ENCODE measurements at regions of chr1 and their contacts with region 1.

Region 1: GRCh38 chr1:182391362-182392044 is at the start of gene GLUL:
- DNase-seq: peak; percentile 58 to 62
- ATAC-seq: peak; percentile 87 to 96
- H3K4me3 ChIP-seq: peak within 1 kb of the TSS; percentile 60
- H3K27ac ChIP-seq: peak within 1 kb of the TSS; percentile 69 to 83
- H3K4me1 ChIP-seq: peaks cover 5% of the 10 kb centered on the region; the same call in 1 of the 3 replicates
- CTCF ChIP-seq: no peak
- EP300 ChIP-seq: no peak
- POLR2A ChIP-seq: peak; percentile 77
- RAD21 ChIP-seq: no peak
- polyA plus RNA-seq, gene GLUL: 33.0 and 41.7 TPM in 2 replicates

Region 2: GRCh38 chr1:182084487-182085316 is 306.8 kb before region 1 on chr1:
- CTCF ChIA-PET with region 1: interaction called, 194 read pairs
- POLR2A ChIA-PET with region 1: no interaction called
- DNase-seq: peak; percentile 68 to 74
- ATAC-seq: peak; percentile 84 to 95
- H3K4me3 ChIP-seq: no peak overlapping the region
- H3K27ac ChIP-seq: no peak overlapping the region
- H3K4me1 ChIP-seq: 0 out of 3 replicates have a peak, but pooled peaks cover 3% of the 10 kb centered on the region
- CTCF ChIP-seq: peak; percentile 72
- EP300 ChIP-seq: no peak
- POLR2A ChIP-seq: no peak
- RAD21 ChIP-seq: peak; percentile 90 to 94

Region 3: GRCh38 chr1:182305861-182306260 is 85.6 kb before region 1 on chr1:
- CTCF ChIA-PET with region 1: no interaction called
- POLR2A ChIA-PET with region 1: no interaction called
- DNase-seq: no peak
- ATAC-seq: no peak
- H3K4me3 ChIP-seq: no peak overlapping the region
- H3K27ac ChIP-seq: no peak overlapping the region
- H3K4me1 ChIP-seq: no peaks in the 10 kb centered on the region
- CTCF ChIP-seq: no peak
- EP300 ChIP-seq: no peak
- POLR2A ChIP-seq: no peak
- RAD21 ChIP-seq: no peak

Region 4: DNA sequence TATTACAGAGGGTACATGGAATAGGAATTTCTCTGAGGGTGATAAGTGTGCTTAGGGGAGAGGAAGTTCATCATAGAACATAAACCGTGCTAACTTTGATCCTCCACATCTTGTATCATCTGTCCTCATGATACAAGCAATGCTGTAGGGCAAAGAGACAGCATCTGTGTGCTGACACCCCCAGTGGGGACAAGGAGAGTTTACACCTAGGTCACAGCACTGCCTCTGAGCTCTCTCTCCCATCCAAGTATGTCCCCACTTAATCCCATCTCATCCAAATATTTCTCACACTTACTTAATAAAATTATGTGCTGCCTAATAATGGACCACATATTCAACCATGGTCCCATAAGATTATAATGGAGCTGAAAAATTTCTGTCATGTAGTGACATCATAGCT is 13.3 kb after region 1 on chr1:
- CTCF ChIA-PET with region 1: interaction called, 14 read pairs
- POLR2A ChIA-PET with region 1: no interaction called
- DNase-seq: no peak
- ATAC-seq: peak in 1 of 2 experiments; percentile 59; a peak in 2 of 6 replicates
- H3K4me3 ChIP-seq: no peak overlapping the region
- H3K27ac ChIP-seq: no peak overlapping the region
- H3K4me1 ChIP-seq: no peaks in the 10 kb centered on the region
- CTCF ChIP-seq: no peak
- EP300 ChIP-seq: no peak
- POLR2A ChIP-seq: no peak
- RAD21 ChIP-seq: no peak

Region 5: GRCh38 chr1:182781841-182782586 is 390.5 kb after region 1 on chr1:
- CTCF ChIA-PET with region 1: no interaction called
- POLR2A ChIA-PET with region 1: no interaction called
- DNase-seq: peak; percentile 28 to 47
- ATAC-seq: peak; percentile 42 to 78; a peak in 4 of 6 replicates
- H3K4me3 ChIP-seq: no peak overlapping the region
- H3K27ac ChIP-seq: no peak overlapping the region
- H3K4me1 ChIP-seq: no peaks in the 10 kb centered on the region
- CTCF ChIP-seq: peak; percentile 50
- EP300 ChIP-seq: no peak
- POLR2A ChIP-seq: no peak
- RAD21 ChIP-seq: peak; percentile 45 to 68; a peak in 4 of 5 replicates

Measured in A549 (cell line).